Lower leg skin (tissue), 4 donors: ENCODE measurements at regions of chr18 and their contacts with region 1.

Region 1: DNA sequence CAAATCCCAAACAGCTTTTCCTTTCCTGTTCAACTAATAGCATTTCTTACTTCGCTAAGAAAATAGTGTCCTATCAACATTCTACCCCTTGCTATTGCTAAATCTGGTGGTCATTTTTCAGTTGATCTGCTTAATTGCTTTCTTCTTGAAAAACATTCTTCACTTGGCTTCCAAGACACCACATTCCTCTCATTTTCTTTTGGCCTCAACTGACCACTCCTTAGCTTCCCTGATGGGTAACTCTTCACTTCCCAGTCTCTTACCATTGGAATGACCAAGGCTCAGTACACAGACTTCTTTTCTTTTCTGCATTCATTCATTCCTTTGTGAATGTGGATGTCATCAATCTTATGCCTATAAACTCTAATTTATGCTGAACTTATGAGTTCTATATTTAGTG is 230.8 kb upstream of the CDH2 start:
- DNase-seq: no peak
- H3K4me3 ChIP-seq: no peak overlapping the region
- CTCF ChIP-seq: no peak
- POLR2A ChIP-seq: no peak

Region 2: GRCh38 chr18:28350821-28351220 is 56.9 kb before region 1 on chr18:
- intact Hi-C with region 1: no loop called
- DNase-seq: no peak
- H3K4me3 ChIP-seq: no peak overlapping the region
- CTCF ChIP-seq: no peak
- POLR2A ChIP-seq: no peak

Region 3: DNA sequence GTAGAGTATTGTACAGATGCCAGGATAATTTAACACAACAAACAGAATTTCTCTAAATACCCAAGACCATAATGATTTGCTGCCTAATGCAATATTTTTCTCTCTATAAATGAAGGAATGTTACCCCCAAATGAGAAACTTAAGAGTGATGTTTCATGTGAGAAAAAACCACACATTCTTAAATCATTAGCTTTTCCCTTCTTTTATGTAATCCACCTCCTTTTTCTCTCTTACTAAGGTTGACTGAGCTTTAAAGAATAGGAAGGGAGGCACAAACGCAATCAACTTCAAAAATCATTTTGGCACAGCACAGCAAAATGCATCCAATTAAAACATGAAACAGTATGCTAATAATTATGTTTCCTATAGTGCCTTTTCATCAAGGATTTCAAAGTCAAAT is 467.4 kb after region 1 on chr18:
- intact Hi-C with region 1: loop called (anchors 10 kb)
- DNase-seq: no peak
- H3K4me3 ChIP-seq: no peak overlapping the region
- CTCF ChIP-seq: no peak
- POLR2A ChIP-seq: no peak